ENCODE measurements at regions of chr15 and their contacts with region 1.

Region 1: DNA sequence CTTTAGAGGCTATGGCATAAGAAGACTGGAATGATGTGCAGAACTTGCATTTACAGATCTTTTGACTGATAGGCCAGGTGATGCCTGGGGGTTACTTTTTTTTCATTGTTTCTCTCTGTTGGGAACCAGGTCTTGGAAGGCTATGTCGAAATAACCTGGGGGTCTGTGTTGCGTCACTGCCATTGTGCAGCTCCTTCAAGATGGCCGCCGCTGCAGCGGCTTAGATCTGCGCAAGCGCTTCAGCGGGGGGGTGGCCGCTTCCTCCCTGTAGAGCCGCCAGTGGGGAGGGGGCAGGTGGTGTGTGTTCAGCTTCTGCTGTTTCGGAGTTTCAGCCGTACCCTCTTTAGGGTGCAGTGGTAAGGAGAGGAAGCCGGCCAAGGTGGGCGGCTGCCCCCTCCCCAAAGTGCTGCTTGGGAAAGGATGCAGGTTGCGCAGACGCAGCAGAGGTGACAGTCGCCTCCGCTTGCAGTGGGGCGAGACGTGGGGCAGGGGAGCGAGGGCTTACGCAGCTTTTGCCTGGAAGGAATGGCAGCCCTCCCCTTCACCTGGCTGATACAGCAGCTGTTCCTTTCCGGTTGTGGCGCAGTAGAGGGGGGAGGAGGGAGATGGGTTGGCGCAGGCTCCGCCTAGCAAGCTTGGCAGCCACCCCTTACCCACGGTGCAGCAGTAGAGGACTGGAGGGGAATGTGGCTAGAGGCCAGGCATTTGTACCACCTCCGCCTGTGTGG is 1.5 kb downstream of the SNRPN start:
- DNase-seq: peak; percentile 36 to 89 (median 75)
- ATAC-seq: peak; percentile 68 to 80 (median 78)
- H3K4me3 ChIP-seq: peak overlapping the region; percentile 81 to 87
- H3K4me3 Mint-ChIP-seq: peak overlapping the region; percentile 92 to 94 (median 93)
- H3K27ac ChIP-seq: peak overlapping the region; percentile 88
- H3K27ac Mint-ChIP-seq: peak overlapping the region; percentile 94 to 96
- H3K4me1 ChIP-seq: peaks cover 3 to 18% of the 10 kb centered on the region in 2 experiments
- H3K4me1 Mint-ChIP-seq: peaks cover 6 to 30% (median 27%) of the 10 kb centered on the region in 3 donors
- H3K27me3 ChIP-seq: no peaks in the 10 kb centered on the region
- H3K27me3 Mint-ChIP-seq: peaks cover 0 to 2% of the 10 kb centered on the region in 2 donors

Region 2: DNA sequence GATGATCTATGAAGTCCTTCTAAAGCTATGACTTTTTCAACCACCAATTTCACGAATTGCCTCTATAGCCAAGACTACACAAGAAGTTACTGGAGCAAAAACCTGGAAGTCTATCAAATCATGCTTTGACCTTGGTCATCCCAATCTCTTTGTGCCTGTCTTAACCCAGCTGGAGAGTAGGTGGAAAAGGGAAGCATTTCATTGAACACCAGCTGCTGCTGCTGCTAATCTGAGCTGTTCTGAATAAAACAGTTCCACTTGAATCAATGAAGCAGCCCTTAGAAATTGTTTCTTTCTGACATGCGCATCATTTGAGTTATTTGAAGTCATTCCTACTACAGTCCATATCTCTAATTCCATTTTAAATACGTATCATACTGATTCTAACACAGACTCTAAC is 489.8 kb after region 1 on chr15:
- CTCF ChIA-PET with region 1: no interaction called
- POLR2A ChIA-PET with region 1: interaction called in 1 of 2 experiments, 12 read pairs
- DNase-seq: no peak
- ATAC-seq: no peak
- H3K4me3 ChIP-seq: no peak overlapping the region
- H3K4me3 Mint-ChIP-seq: no peak overlapping the region
- H3K27ac ChIP-seq: no peak overlapping the region
- H3K27ac Mint-ChIP-seq: no peak overlapping the region
- H3K4me1 ChIP-seq: no peaks in the 10 kb centered on the region
- H3K4me1 Mint-ChIP-seq: no peaks in the 10 kb centered on the region
- H3K27me3 ChIP-seq: peaks cover 0 to 3% of the 10 kb centered on the region in 2 experiments
- H3K27me3 Mint-ChIP-seq: peaks cover 18 to 21% of the 10 kb centered on the region in 2 donors

Measured in T-cell (primary cell).